Heart left ventricle (tissue), 16 donors: ENCODE measurements at regions of chr1 and their contacts with region 1.

Region 1: GRCh38 chr1:198465201-198466144 is 75.0 kb downstream of the ATP6V1G3 start:
- DNase-seq: no peak
- ATAC-seq: no peak
- H3K4me3 ChIP-seq: no peak overlapping the region
- H3K27ac ChIP-seq: no peak overlapping the region
- H3K4me1 ChIP-seq: peaks cover 0 to 5% (median 0%) of the 10 kb centered on the region in 12 donors
- H3K27me3 ChIP-seq: no peaks in the 10 kb centered on the region
- CTCF ChIP-seq: peak; percentile 43 to 75 (median 61)
- POLR2A ChIP-seq: no peak

Region 2: DNA sequence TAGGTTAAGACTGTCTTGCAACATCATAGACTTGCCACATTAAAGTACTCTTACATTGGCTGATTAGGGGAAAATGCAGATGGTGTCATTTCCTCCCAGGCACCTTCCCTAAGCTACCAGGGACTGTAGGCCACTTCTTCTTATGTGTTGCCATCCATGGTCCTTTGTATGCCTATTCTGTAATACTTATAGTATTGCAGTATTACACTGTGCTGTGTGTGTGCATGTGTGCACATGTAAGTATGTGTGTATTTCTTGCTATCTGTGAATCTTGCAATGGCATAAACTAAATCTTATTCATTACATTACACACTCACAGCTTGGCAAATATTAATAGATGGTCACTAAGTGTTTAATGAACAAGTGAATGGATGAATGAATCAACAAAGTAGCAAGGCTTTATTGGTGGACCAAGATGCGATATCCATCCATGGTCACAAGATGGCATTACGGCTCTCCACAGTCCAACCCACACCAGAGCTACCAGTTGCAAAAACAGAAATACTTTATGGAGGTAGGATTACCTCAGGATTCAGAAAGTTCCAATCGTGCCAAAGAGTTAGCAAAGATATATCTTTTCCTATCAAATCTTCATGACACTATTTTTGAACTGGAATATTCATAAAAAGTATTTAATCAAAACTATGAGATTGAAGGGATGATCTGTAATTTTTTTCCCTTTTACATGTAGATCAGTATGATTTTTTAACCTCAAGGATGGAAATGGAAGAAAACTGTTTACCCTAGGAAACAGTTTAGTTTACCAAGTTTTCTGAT is 850.4 kb before region 1 on chr1:
- intact Hi-C with region 1: loop called in 7 of 10 experiments (anchors 5 to 10 kb)
- DNase-seq: no peak
- ATAC-seq: peak in 3 of 4 donors; percentile 73 to 84 (median 81)
- H3K4me3 ChIP-seq: no peak overlapping the region
- H3K27ac ChIP-seq: no peak overlapping the region
- H3K4me1 ChIP-seq: peaks cover 0 to 15% (median 3%) of the 10 kb centered on the region in 12 donors
- H3K27me3 ChIP-seq: no peaks in the 10 kb centered on the region
- CTCF ChIP-seq: peak; percentile 45 to 69 (median 58)
- POLR2A ChIP-seq: no peak

Region 3: DNA sequence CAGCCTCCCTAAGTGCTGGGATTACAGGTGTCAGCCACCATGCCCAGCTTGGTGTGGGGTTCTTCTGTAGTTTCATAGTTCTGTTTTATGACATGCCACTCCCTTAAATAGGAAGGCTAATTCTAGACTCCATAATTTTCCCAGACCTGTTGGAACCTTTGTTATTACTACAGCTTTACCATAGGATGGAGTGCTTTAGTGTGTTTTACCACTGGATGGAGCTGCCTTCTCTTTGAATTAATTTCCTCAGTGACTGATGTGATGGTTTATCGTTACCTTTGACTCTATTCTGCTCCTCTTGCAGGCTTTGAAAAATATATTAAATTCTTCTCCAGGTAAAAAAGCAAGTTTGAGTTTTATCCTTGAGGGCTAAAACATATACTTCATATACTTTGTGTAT is 393.3 kb before region 1 on chr1:
- intact Hi-C with region 1: loop called in 3 of 10 experiments (anchors 5 kb)
- DNase-seq: no peak
- ATAC-seq: no peak
- H3K4me3 ChIP-seq: no peak overlapping the region
- H3K27ac ChIP-seq: no peak overlapping the region
- H3K4me1 ChIP-seq: no peaks in the 10 kb centered on the region
- H3K27me3 ChIP-seq: peaks cover 0 to 7% (median 0%) of the 10 kb centered on the region in 9 donors
- CTCF ChIP-seq: peak in 8 of 12 donors; percentile 7 to 44 (median 24)
- POLR2A ChIP-seq: no peak

Region 4: GRCh38 chr1:198096390-198096789 is 369.1 kb before region 1 on chr1:
- intact Hi-C with region 1: loop called in 1 of 10 experiments (anchors 5 kb)
- DNase-seq: no peak
- ATAC-seq: no peak
- H3K4me3 ChIP-seq: no peak overlapping the region
- H3K27ac ChIP-seq: no peak overlapping the region
- H3K4me1 ChIP-seq: no peaks in the 10 kb centered on the region
- H3K27me3 ChIP-seq: no peaks in the 10 kb centered on the region
- CTCF ChIP-seq: no peak
- POLR2A ChIP-seq: no peak

Region 5: GRCh38 chr1:198359024-198359653 is 106.3 kb before region 1 on chr1:
- intact Hi-C with region 1: loop called in 1 of 10 experiments (anchors 10 kb)
- DNase-seq: no peak
- ATAC-seq: no peak
- H3K4me3 ChIP-seq: no peak overlapping the region
- H3K27ac ChIP-seq: no peak overlapping the region
- H3K4me1 ChIP-seq: no peaks in the 10 kb centered on the region
- H3K27me3 ChIP-seq: no peaks in the 10 kb centered on the region
- CTCF ChIP-seq: peak; percentile 27 to 61 (median 44)
- POLR2A ChIP-seq: no peak

Region 6: GRCh38 chr1:198408716-198409115 is 56.8 kb before region 1 on chr1:
- intact Hi-C with region 1: no loop called
- DNase-seq: no peak
- ATAC-seq: no peak
- H3K4me3 ChIP-seq: no peak overlapping the region
- H3K27ac ChIP-seq: no peak overlapping the region
- H3K4me1 ChIP-seq: no peaks in the 10 kb centered on the region
- H3K27me3 ChIP-seq: no peaks in the 10 kb centered on the region
- CTCF ChIP-seq: no peak
- POLR2A ChIP-seq: no peak

Region 7: DNA sequence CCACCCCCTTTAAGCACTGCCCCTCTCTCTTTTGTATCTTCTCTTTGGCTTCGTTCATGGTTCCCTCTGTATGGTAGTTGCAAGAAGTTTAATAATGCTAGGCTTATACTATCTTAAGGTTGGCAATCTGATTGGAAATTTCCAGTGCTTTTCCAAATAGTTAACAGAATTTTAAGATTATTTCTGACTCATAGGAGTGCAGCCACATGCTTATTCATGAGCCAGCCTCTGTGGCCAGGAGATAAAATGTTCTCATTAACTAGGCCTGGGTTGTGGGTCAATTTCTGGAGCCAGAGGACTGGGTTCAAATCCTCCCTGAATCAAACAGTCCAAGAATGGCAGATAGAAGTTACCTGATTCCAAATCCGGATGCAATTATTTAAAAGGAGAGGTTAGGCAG is 28.1 kb before region 1 on chr1:
- intact Hi-C with region 1: no loop called
- DNase-seq: no peak
- ATAC-seq: no peak
- H3K4me3 ChIP-seq: no peak overlapping the region
- H3K27ac ChIP-seq: no peak overlapping the region
- H3K4me1 ChIP-seq: no peaks in the 10 kb centered on the region
- H3K27me3 ChIP-seq: no peaks in the 10 kb centered on the region
- CTCF ChIP-seq: no peak
- POLR2A ChIP-seq: no peak